ENCODE measurements at regions of chr3 and their contacts with region 1.

Region 1: DNA sequence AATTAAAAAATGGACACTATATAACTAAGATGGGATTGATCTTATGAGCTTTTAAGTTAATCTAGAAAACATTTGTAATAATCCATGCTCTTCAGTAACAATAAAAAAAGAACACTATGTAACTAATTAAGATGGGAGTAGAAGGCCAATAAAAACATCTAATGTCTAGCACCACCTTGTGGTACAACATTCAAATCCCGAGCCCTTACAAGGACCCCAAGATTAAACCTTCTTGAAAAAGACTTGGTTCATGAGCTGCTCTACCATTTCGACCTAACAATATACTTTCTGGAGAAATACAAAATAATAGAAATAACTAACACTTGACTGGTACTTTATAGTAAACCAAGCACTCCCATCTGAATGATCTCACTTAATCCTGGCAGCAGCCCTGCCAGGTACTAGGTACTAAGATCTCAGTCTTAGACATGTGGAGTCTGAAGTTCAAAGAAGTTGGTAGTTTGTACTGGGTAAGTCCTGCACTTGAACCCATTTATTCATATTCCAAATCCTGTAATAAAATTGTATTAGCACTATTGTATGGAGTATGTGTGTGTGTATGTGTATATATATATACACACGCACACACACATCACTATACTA is 21.8 kb downstream of the METTL6 start:
- DNase-seq: no peak
- ATAC-seq: peak in 3 of 4 donors; percentile 49 to 77 (median 68)
- H3K4me3 ChIP-seq: no peak overlapping the region
- H3K27ac ChIP-seq: no peak overlapping the region
- H3K4me1 ChIP-seq: peaks cover 0 to 18% (median 0%) of the 10 kb centered on the region in 12 donors
- H3K27me3 ChIP-seq: no peaks in the 10 kb centered on the region
- CTCF ChIP-seq: peak; percentile 49 to 74 (median 64)
- POLR2A ChIP-seq: no peak

Region 2: GRCh38 chr3:15108082-15108545 is 297.4 kb before region 1 on chr3:
- intact Hi-C with region 1: loop called in 5 of 10 experiments (anchors 2 to 10 kb)
- DNase-seq: peak; percentile 60 to 87 (median 68)
- ATAC-seq: peak; percentile 63 to 82 (median 78)
- H3K4me3 ChIP-seq: no peak overlapping the region
- H3K27ac ChIP-seq: no peak overlapping the region
- H3K4me1 ChIP-seq: peaks cover 0 to 11% (median 4%) of the 10 kb centered on the region in 12 donors
- H3K27me3 ChIP-seq: no peaks in the 10 kb centered on the region
- CTCF ChIP-seq: peak; percentile 78 to 93 (median 88)
- POLR2A ChIP-seq: no peak

Region 3: DNA sequence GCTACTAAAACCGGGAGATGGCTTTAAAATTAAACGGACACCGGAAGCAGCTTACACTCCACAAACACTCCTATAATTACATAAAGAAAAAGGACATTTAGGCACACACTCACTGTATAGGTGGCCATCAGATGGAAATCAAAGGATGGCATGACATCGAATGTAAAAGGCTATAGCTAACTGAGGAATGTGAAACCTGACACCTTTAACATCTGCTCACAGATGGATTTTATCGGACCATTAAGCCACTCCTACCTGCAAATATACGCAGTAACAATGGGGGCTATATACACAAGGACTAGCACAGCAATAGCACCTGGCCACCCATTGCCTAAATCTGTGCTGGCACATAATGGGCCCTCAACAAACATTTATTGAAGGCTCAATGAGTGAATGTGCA is 292.1 kb before region 1 on chr3:
- intact Hi-C with region 1: loop called in 5 of 10 experiments (anchors 2 to 10 kb)
- DNase-seq: no peak
- ATAC-seq: no peak
- H3K4me3 ChIP-seq: no peak overlapping the region
- H3K27ac ChIP-seq: no peak overlapping the region
- H3K4me1 ChIP-seq: peaks cover 0 to 6% (median 0%) of the 10 kb centered on the region in 12 donors
- H3K27me3 ChIP-seq: peaks cover 0 to 7% (median 0%) of the 10 kb centered on the region in 9 donors
- CTCF ChIP-seq: no peak
- POLR2A ChIP-seq: no peak

Region 4: DNA sequence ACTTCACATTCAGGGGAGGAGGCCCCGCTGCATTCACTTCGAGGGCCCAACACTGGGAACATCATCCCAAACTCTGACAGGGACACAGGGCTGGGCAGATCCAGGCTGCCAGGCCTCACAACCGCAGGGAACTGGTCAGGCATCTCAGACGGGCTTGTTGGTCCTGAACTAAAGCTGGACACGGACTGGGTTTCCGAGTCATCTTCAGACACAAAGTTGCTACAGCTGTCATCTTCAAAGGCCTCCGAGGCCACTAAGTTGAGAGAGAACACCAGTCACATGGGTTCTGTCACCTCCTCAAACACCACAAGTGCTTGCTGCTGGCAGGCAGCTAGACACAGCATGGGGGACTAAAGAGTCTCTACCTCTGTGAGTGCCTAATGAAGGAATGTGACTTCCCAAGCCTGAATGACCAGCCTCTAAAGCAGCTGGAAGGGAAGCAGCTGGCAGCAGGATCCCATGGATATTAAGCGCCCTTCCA is 148.6 kb before region 1 on chr3:
- intact Hi-C with region 1: no loop called
- DNase-seq: no peak
- ATAC-seq: peak; percentile 46 to 68 (median 56)
- H3K4me3 ChIP-seq: no peak overlapping the region
- H3K27ac ChIP-seq: peak overlapping the region in 10 of 12 donors; percentile 4 to 70 (median 37)
- H3K4me1 ChIP-seq: peaks cover 0 to 25% (median 3%) of the 10 kb centered on the region in 12 donors
- H3K27me3 ChIP-seq: no peaks in the 10 kb centered on the region
- CTCF ChIP-seq: no peak
- POLR2A ChIP-seq: no peak